Psoas muscle (tissue), 8 donors: ENCODE measurements at regions of chr6 and their contacts with region 1.

Region 1: GRCh38 chr6:124989136-124989983 is 27.1 kb downstream of the RNF217 start:
- DNase-seq: no peak
- ATAC-seq: peak in 1 of 4 donors; percentile 50
- H3K4me3 ChIP-seq: no peak overlapping the region
- H3K27ac ChIP-seq: no peak overlapping the region
- H3K4me1 ChIP-seq: peaks cover 46% of the 10 kb centered on the region
- H3K27me3 ChIP-seq: no peaks in the 10 kb centered on the region
- CTCF ChIP-seq: no peak

Region 2: GRCh38 chr6:124888581-124889371 is 100.6 kb before region 1 on chr6:
- intact Hi-C with region 1: no loop called
- DNase-seq: no peak
- ATAC-seq: no peak
- H3K4me3 ChIP-seq: no peak overlapping the region
- H3K27ac ChIP-seq: no peak overlapping the region
- H3K4me1 ChIP-seq: peaks cover 10% of the 10 kb centered on the region
- H3K27me3 ChIP-seq: no peaks in the 10 kb centered on the region
- CTCF ChIP-seq: no peak

Region 3: DNA sequence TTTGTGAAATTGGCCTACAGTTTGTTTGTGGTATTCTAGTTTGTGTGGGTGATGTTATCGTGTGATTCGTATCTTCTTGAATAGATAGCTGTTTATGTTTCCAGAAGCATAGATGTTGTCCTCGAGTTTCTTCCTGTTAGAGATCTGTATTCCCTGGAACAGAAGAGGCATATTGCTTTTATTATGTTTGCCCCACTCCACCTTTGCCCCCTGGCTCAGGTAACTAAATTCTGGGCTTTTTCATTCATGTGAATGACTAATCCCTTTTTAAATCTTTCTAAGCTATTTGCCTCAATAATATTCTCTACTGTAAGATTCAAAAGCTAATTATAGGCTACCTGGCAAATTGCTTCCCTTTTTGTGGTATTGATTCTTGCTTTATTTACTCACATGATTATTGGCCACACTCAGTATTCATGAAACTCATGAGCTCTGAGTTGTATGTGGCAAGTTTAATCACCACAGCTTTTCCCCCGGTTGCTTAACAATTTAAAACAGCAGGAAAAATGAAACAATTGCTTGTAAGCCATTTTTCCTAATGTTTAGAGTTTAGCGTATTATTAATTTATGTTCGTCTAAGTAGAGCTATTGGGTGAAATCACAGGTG is 14.5 kb before region 1 on chr6:
- intact Hi-C with region 1: loop called in 1 of 2 experiments (anchors 2 kb)
- DNase-seq: no peak
- ATAC-seq: no peak
- H3K4me3 ChIP-seq: no peak overlapping the region
- H3K27ac ChIP-seq: no peak overlapping the region
- H3K4me1 ChIP-seq: peaks cover 14% of the 10 kb centered on the region
- H3K27me3 ChIP-seq: no peaks in the 10 kb centered on the region
- CTCF ChIP-seq: no peak